B cell (primary cell): ENCODE measurements at regions of chr1 and their contacts with region 1.

Region 1: DNA sequence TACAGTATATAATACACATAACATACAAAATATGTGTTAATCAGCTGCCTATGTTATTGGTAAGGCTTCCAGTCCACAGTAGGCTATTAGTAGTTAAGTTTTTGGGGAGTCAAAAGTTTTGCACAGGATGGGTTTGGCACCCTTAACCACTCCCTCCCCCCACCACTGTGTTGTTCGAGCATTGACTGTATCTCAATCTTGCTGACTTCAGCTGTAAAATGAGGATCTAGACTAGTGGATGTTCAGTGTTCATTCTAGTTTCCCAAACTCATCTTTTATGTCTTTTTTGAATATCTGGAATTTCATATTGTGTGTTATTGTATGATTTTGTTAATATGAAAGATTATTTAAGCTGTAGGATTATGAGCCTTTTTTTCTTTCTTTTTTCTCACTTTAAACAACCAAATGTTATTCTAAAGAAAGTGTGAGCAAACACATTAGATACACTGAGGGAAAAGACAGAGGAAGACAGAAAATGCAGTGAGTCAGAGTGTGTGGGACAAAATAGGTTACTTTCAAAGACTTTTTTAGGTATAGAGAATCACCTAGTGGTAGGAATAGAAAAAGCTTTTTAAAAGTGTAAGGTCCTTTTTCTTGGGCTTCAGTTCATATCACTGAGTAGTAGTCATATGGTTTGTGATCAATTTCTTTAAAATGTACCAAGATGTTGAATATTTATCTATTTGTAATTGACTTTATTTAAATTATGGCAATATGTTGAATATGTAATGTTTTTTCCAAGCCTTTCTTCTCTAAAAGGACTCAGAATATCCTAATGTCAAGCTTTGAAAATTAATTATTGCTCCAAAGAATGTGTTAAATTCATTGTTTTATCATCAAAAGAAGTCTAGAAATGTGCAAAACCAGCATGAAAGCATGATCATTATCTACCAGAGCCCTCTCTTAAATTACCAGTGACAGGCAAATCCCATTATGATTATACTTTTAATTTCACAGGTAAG is 17.9 kb upstream of the CENPF start:
- DNase-seq: no peak
- ATAC-seq: no peak
- H3K4me3 ChIP-seq: no peak overlapping the region
- H3K4me3 Mint-ChIP-seq: no peak overlapping the region
- H3K27ac ChIP-seq: no peak overlapping the region
- H3K27ac Mint-ChIP-seq: no peak overlapping the region
- H3K4me1 ChIP-seq: no peaks in the 10 kb centered on the region
- H3K4me1 Mint-ChIP-seq: no peaks in the 10 kb centered on the region
- H3K27me3 ChIP-seq: peaks cover 0 to 8% (median 3%) of the 10 kb centered on the region in 4 experiments
- H3K27me3 Mint-ChIP-seq: peaks cover 36% of the 10 kb centered on the region
- CTCF ChIP-seq: peak; percentile 28

Region 2: GRCh38 chr1:214525535-214526019 is 59.5 kb before region 1 on chr1:
- CTCF ChIA-PET with region 1: no interaction called
- POLR2A ChIA-PET with region 1: no interaction called
- intact Hi-C with region 1: no loop called
- DNase-seq: no peak
- ATAC-seq: no peak
- H3K4me3 ChIP-seq: no peak overlapping the region
- H3K4me3 Mint-ChIP-seq: no peak overlapping the region
- H3K27ac ChIP-seq: no peak overlapping the region
- H3K27ac Mint-ChIP-seq: no peak overlapping the region
- H3K4me1 ChIP-seq: peaks cover 0 to 3% of the 10 kb centered on the region in 2 donors
- H3K4me1 Mint-ChIP-seq: peaks cover 7% of the 10 kb centered on the region
- H3K27me3 ChIP-seq: no peaks in the 10 kb centered on the region
- H3K27me3 Mint-ChIP-seq: peaks cover 16% of the 10 kb centered on the region
- CTCF ChIP-seq: no peak

Region 3: GRCh38 chr1:214615871-214616270 is 30.8 kb after region 1 on chr1:
- CTCF ChIA-PET with region 1: no interaction called
- POLR2A ChIA-PET with region 1: no interaction called
- intact Hi-C with region 1: loop called (anchors 2 kb)
- DNase-seq: no peak
- ATAC-seq: no peak
- H3K4me3 ChIP-seq: no peak overlapping the region
- H3K4me3 Mint-ChIP-seq: no peak overlapping the region
- H3K27ac ChIP-seq: no peak overlapping the region
- H3K27ac Mint-ChIP-seq: no peak overlapping the region
- H3K4me1 ChIP-seq: no peaks in the 10 kb centered on the region
- H3K4me1 Mint-ChIP-seq: peaks cover 4% of the 10 kb centered on the region
- H3K27me3 ChIP-seq: no peaks in the 10 kb centered on the region
- H3K27me3 Mint-ChIP-seq: no peaks in the 10 kb centered on the region
- CTCF ChIP-seq: no peak

Region 4: DNA sequence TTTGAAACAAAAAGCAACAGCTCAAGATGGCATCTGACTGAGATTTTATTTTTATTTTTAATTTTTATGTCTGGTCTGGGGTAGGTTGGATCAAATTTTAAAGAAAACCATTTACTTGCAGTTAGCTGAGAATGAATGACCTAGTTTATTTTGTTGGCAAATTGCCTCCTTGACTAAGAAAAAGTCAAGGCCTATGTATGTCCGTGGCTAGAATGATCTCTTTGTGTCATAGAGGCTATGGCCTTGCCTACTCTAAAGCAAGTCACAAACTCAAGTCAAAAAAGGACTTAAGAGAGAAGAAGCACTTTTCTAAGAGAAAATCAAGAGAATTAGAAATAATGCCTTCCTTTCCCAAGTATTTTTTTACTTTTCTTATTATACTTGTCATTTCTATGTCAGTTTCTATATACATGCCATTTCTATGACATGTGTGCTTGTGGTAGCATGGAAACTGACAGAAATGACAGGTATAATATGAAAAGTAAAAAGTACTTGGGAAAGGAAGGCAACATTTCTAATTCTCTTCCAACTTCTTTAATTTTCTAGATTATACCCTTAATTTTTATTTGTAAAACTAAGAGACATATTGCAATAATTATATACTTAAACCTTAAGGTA is 154.6 kb after region 1 on chr1:
- CTCF ChIA-PET with region 1: no interaction called
- POLR2A ChIA-PET with region 1: no interaction called
- intact Hi-C with region 1: no loop called
- DNase-seq: no peak
- ATAC-seq: no peak
- H3K4me3 ChIP-seq: no peak overlapping the region
- H3K4me3 Mint-ChIP-seq: no peak overlapping the region
- H3K27ac ChIP-seq: no peak overlapping the region
- H3K27ac Mint-ChIP-seq: no peak overlapping the region
- H3K4me1 ChIP-seq: no peaks in the 10 kb centered on the region
- H3K4me1 Mint-ChIP-seq: no peaks in the 10 kb centered on the region
- H3K27me3 ChIP-seq: no peaks in the 10 kb centered on the region
- H3K27me3 Mint-ChIP-seq: no peaks in the 10 kb centered on the region
- CTCF ChIP-seq: no peak